ENCODE measurements at regions of chr2 and their contacts with region 1.

Region 1: GRCh38 chr2:231212329-231212845 is 14.0 kb downstream of the ARMC9 start:
- DNase-seq: peak; percentile 92
- ATAC-seq: peak; percentile 89
- H3K4me3 ChIP-seq: no peak overlapping the region
- H3K27ac ChIP-seq: peak overlapping the region; percentile 88
- H3K4me1 ChIP-seq: peaks cover 31% of the 10 kb centered on the region
- H3K27me3 ChIP-seq: no peaks in the 10 kb centered on the region
- CTCF ChIP-seq: no peak

Region 2: GRCh38 chr2:230254152-230254881 is 958.1 kb before region 1 on chr2:
- CTCF ChIA-PET with region 1: no interaction called
- POLR2A ChIA-PET with region 1: no interaction called
- intact Hi-C with region 1: no loop called
- DNase-seq: no peak
- ATAC-seq: no peak
- H3K4me3 ChIP-seq: no peak overlapping the region
- H3K27ac ChIP-seq: no peak overlapping the region
- H3K4me1 ChIP-seq: no peaks in the 10 kb centered on the region
- H3K27me3 ChIP-seq: peaks cover 13% of the 10 kb centered on the region
- CTCF ChIP-seq: no peak

Region 3: GRCh38 chr2:231161877-231162329 is 50.5 kb before region 1 on chr2:
- CTCF ChIA-PET with region 1: no interaction called
- POLR2A ChIA-PET with region 1: no interaction called
- intact Hi-C with region 1: loop called (anchors 2 kb)
- DNase-seq: peak; percentile 64
- ATAC-seq: peak; percentile 88
- H3K4me3 ChIP-seq: no peak overlapping the region
- H3K27ac ChIP-seq: peak overlapping the region; percentile 72
- H3K4me1 ChIP-seq: peaks cover 16% of the 10 kb centered on the region
- H3K27me3 ChIP-seq: no peaks in the 10 kb centered on the region
- CTCF ChIP-seq: no peak

Region 4: DNA sequence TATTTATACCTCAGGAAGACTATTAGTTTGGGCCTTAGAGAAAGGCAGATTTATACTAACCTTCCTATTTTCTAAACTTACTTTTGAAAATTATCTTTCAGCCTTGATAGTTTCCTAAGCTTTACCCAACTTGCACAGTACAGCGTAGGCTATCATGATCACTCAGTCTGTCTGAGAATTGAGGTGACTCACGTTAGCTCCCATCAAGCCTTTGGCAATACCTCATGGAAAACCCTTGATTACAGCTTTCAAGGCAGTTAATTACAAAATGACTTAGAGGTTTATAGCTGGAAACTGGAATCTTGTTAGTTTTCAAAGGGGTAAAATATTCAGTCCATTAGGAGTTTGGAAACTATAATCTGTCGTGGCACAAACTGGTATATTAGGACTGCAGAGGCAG is 40.4 kb before region 1 on chr2:
- CTCF ChIA-PET with region 1: no interaction called
- POLR2A ChIA-PET with region 1: no interaction called
- intact Hi-C with region 1: no loop called
- DNase-seq: no peak
- ATAC-seq: no peak
- H3K4me3 ChIP-seq: no peak overlapping the region
- H3K27ac ChIP-seq: no peak overlapping the region
- H3K4me1 ChIP-seq: no peaks in the 10 kb centered on the region
- H3K27me3 ChIP-seq: no peaks in the 10 kb centered on the region
- CTCF ChIP-seq: no peak

Region 5: DNA sequence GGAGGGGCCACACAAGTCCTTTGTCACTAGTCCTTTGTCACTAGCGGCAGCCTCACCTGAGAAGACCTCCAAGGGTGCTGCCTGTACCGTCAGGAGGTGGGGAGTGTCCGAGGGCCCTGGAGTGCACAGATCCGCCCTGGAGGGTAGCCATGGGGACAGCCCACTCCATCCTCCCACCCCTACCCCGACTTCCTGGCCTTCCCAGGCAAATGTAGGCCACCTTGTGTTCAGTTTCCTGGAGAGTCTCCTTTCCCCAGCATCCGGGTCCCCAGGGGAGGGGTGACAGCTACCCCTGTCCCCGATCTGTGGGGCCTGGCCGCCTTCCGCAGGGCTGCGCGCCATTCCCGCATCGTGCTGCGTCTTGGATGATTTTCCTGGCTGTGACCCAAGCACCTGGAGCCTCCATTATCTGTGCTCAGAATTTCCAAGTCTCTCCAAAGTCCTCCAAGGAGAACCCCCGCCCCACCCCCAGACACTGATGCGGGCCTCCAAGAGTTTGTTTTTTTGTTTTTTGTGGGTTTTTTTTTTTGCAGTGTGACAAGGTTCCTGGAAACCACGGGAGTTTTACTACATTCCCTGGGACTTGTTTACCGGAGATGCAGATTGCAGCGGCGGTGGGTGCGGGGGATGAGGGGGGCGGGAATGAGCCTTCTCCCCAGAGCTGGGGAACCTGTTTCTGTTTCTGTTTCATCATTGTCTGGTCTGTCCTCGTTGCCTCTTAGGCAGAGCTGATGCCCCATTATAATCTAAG is 408.9 kb after region 1 on chr2:
- CTCF ChIA-PET with region 1: no interaction called
- POLR2A ChIA-PET with region 1: no interaction called
- intact Hi-C with region 1: no loop called
- DNase-seq: peak; percentile 55
- ATAC-seq: peak; percentile 70
- H3K4me3 ChIP-seq: peak overlapping the region; percentile 31; the same call in 1 of the 2 replicates
- H3K27ac ChIP-seq: peak overlapping the region; percentile 59
- H3K4me1 ChIP-seq: peaks cover 36% of the 10 kb centered on the region
- H3K27me3 ChIP-seq: no peaks in the 10 kb centered on the region
- CTCF ChIP-seq: no peak